ENCODE measurements at regions of chr17 and their contacts with region 1.

Region 1: GRCh38 chr17:47733047-47733673 is at the start of gene TBX21:
- DNase-seq: peak; percentile 96
- ATAC-seq: peak; percentile 80
- H3K4me3 Mint-ChIP-seq: peak within 1 kb of the TSS; percentile 93
- H3K27ac Mint-ChIP-seq: peak within 1 kb of the TSS; percentile 98
- H3K4me1 Mint-ChIP-seq: peaks cover 63% of the 10 kb centered on the region
- H3K27me3 Mint-ChIP-seq: no peaks in the 10 kb centered on the region
- total RNA-seq, gene TBX21: 73.4 to 76.8 TPM

Region 2: GRCh38 chr17:47604598-47604927 is 128.6 kb before region 1 on chr17:
- CTCF ChIA-PET with region 1: no interaction called
- POLR2A ChIA-PET with region 1: no interaction called
- intact Hi-C with region 1: no loop called
- DNase-seq: no peak
- ATAC-seq: no peak
- H3K4me3 Mint-ChIP-seq: no peak overlapping the region
- H3K27ac Mint-ChIP-seq: peak overlapping the region; percentile 14
- H3K4me1 Mint-ChIP-seq: peaks cover 4% of the 10 kb centered on the region
- H3K27me3 Mint-ChIP-seq: no peaks in the 10 kb centered on the region

Region 3: DNA sequence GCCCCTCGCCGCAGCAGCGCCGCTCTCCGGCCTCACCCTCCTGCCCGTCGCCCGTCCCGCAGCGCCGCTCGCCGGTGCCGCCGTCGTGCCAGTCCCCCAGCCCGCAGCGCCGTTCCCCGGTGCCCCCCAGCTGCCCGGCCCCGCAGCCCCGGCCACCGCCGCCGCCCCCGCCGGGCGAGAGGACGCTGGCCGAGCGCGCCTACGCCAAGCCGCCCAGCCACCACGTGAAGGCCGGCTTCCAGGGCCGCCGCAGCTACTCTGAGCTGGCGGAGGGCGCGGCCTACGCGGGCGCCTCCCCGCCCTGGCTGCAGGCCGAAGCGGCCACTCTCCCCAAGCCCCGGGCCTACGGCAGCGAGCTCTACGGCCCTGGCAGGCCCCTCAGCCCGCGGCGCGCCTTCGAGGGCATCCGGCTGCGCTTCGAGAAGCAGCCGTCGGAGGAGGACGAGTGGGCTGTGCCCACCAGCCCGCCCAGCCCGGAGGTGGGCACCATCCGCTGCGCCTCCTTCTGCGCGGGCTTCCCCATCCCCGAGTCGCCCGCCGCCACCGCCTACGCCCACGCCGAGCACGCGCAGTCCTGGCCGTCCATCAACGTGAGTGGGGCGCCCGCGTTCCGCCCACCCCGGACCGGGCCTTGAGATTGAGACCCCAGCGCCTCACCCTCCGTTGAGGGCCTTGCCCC is 24.2 kb before region 1 on chr17:
- CTCF ChIA-PET with region 1: interaction called, 13 read pairs
- POLR2A ChIA-PET with region 1: no interaction called
- intact Hi-C with region 1: loop called in 1 of 2 experiments (anchors 1 kb)
- DNase-seq: no peak
- ATAC-seq: no peak
- H3K4me3 Mint-ChIP-seq: no peak overlapping the region
- H3K27ac Mint-ChIP-seq: no peak overlapping the region
- H3K4me1 Mint-ChIP-seq: peaks cover 62% of the 10 kb centered on the region
- H3K27me3 Mint-ChIP-seq: no peaks in the 10 kb centered on the region

Region 4: GRCh38 chr17:48555258-48556228 is 822.4 kb after region 1 on chr17:
- CTCF ChIA-PET with region 1: no interaction called
- POLR2A ChIA-PET with region 1: no interaction called
- intact Hi-C with region 1: no loop called
- DNase-seq: peak; percentile 23
- ATAC-seq: peak; percentile 55
- H3K4me3 Mint-ChIP-seq: peak overlapping the region; percentile 53
- H3K27ac Mint-ChIP-seq: no peak overlapping the region
- H3K4me1 Mint-ChIP-seq: peaks cover 2% of the 10 kb centered on the region
- H3K27me3 Mint-ChIP-seq: peaks cover 30% of the 10 kb centered on the region